ENCODE measurements at regions of chr4 and their contacts with region 1.

Region 1: GRCh38 chr4:103019308-103020124 is at the start of gene SLC9B1:
- DNase-seq: peak; percentile 91 to 98 (median 96)
- ATAC-seq: peak; percentile 99
- H3K4me3 ChIP-seq: peak within 1 kb of the TSS; percentile 35 to 51
- H3K27ac ChIP-seq: peak within 1 kb of the TSS; percentile 87 to 92
- H3K4me1 ChIP-seq: peaks cover 7 to 15% of the 10 kb centered on the region in 2 donors
- H3K27me3 ChIP-seq: no peaks in the 10 kb centered on the region
- CTCF ChIP-seq: no peak
- polyA plus RNA-seq, gene SLC9B1: 2.7 to 4.7 (median 3.7) TPM

Region 2: DNA sequence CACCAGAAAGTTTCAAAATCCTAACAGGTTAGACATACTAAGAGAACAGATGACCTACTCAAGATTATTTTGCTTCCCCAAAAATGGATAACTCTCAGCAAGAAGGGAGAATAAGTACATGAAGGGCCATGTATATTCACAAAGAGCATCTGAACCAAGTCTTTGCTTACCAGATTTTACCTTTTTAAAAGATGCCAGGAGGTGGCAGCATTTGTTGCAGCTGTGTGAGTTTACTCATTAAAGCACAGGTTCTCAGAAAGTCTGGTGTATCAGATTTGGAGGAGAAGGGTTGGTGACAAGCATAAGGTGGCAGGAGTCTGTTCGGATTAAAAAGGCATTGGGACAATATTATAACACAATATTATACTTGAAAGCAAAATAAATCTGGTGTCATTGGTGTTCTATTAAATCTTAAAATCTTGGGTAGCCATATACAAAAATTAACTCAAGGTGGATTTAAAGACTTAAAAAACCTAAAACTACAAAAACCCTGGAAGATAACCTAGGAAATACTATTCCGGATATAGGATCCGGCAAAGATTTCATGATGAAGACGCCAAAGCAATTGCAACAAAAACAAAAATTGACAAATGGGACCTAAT is 569.7 kb before region 1 on chr4:
- intact Hi-C with region 1: loop called in 1 of 2 experiments (anchors 10 kb)
- DNase-seq: peak in 1 of 4 donors; percentile 70
- ATAC-seq: peak; percentile 90
- H3K4me3 ChIP-seq: no peak overlapping the region
- H3K27ac ChIP-seq: no peak overlapping the region
- H3K4me1 ChIP-seq: no peaks in the 10 kb centered on the region
- H3K27me3 ChIP-seq: no peaks in the 10 kb centered on the region
- CTCF ChIP-seq: peak; percentile 49 to 62

Region 3: DNA sequence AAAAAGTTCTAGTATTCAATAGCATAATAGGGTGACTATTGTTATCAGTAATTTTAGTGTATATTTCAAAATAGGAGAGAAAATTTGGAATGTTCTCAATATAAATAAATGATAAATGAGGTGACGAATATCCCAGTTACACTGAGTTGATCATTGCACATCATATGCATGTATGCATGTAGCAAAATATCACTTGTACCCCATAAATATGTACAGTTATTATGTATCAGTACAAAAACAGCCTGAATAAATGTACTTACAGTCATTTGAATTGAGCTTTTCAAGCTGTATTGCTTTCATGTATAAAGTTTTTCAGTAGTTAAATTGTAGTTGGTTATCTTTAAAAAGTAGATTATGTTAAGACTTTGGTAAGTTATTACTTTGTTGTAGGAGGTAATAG is 138.2 kb before region 1 on chr4:
- intact Hi-C with region 1: no loop called
- DNase-seq: peak in 1 of 4 donors; percentile 5
- ATAC-seq: no peak
- H3K4me3 ChIP-seq: no peak overlapping the region
- H3K27ac ChIP-seq: no peak overlapping the region
- H3K4me1 ChIP-seq: no peaks in the 10 kb centered on the region
- H3K27me3 ChIP-seq: no peaks in the 10 kb centered on the region
- CTCF ChIP-seq: no peak